GM12878 (cell line): ENCODE measurements at regions of chr15 and their contacts with region 1.

Region 1: GRCh38 chr15:85494048-85494793 is 113.8 kb downstream of the AKAP13 start:
- DNase-seq: no peak
- ATAC-seq: no peak
- H3K4me3 ChIP-seq: no peak overlapping the region
- H3K27ac ChIP-seq: no peak overlapping the region
- H3K4me1 ChIP-seq: peaks cover 15% of the 10 kb centered on the region
- H3K27me3 ChIP-seq: no peaks in the 10 kb centered on the region
- CTCF ChIP-seq: no peak
- EP300 ChIP-seq: no peak
- POLR2A ChIP-seq: no peak
- RAD21 ChIP-seq: no peak

Region 2: DNA sequence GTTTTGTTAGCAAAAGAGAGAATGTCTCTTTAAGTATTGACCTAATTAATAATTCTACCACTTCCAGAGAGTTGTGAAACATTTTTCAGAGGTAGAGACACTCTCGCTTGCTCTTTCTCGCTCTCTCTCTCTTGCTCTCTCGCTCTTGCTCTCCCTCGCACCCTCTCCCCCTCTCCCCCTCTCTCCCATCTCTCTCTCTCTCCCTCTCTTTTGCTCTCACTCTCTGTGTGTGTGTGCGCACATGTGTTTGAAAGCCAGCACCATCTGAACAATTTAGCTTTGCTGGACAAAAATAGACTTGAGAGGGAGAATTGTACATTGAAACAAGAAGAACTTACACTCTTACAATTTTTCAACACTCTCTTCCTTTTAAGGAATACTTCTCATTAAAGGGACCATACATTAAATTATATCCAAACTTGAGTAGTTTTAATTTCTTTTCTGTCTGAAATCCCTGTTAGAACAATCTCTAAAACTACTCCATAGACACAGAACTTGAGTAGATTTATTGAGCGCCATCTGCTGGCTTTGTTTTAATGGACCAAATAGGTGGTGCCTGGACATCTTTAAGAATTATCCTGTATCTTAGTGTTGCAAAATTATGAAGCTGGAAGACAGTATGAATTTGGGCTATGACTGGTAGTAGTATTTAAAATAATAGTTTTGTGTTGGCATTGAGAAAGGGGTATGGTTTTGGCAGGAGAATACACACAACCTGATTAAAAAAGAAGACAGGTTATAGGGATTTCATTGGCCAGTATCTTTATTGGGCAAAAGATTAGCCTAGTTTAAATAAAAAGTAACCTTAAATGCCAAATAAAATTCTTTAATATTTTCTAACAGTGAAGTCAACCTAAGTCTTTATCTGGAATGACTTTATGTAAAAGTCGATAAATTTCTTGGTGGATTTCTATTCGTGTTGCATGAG is 10.8 kb after region 1 on chr15:
- CTCF ChIA-PET with region 1: interaction called, 170 read pairs
- POLR2A ChIA-PET with region 1: interaction called, 3 read pairs
- RAD21 ChIA-PET with region 1: interaction called, 75 read pairs
- SMC1A ChIA-PET with region 1: interaction called, 147 read pairs
- in situ Hi-C with region 1: no loop called
- intact Hi-C with region 1: no loop called
- DNase-seq: no peak
- ATAC-seq: peak; percentile 86
- H3K4me3 ChIP-seq: no peak overlapping the region
- H3K27ac ChIP-seq: no peak overlapping the region
- H3K4me1 ChIP-seq: peaks cover 18% of the 10 kb centered on the region
- H3K27me3 ChIP-seq: no peaks in the 10 kb centered on the region
- CTCF ChIP-seq: peak; percentile 38 to 59 (median 55); a peak in 5 of 6 replicates
- EP300 ChIP-seq: no peak
- POLR2A ChIP-seq: no peak
- RAD21 ChIP-seq: peak; percentile 63

Region 3: GRCh38 chr15:85551221-85551832 is 57.1 kb after region 1 on chr15:
- CTCF ChIA-PET with region 1: no interaction called
- POLR2A ChIA-PET with region 1: no interaction called
- RAD21 ChIA-PET with region 1: no interaction called
- SMC1A ChIA-PET with region 1: no interaction called
- in situ Hi-C with region 1: no loop called
- intact Hi-C with region 1: no loop called
- DNase-seq: no peak
- ATAC-seq: no peak
- H3K4me3 ChIP-seq: no peak overlapping the region
- H3K27ac ChIP-seq: no peak overlapping the region
- H3K4me1 ChIP-seq: peaks cover 24% of the 10 kb centered on the region
- H3K27me3 ChIP-seq: no peaks in the 10 kb centered on the region
- CTCF ChIP-seq: no peak
- EP300 ChIP-seq: no peak
- POLR2A ChIP-seq: no peak
- RAD21 ChIP-seq: no peak

Region 4: GRCh38 chr15:86515625-86516024 is 1021.4 kb after region 1 on chr15:
- CTCF ChIA-PET with region 1: no interaction called
- POLR2A ChIA-PET with region 1: no interaction called
- RAD21 ChIA-PET with region 1: no interaction called
- SMC1A ChIA-PET with region 1: no interaction called
- in situ Hi-C with region 1: no loop called
- intact Hi-C with region 1: no loop called
- DNase-seq: no peak
- ATAC-seq: no peak
- H3K4me3 ChIP-seq: no peak overlapping the region
- H3K27ac ChIP-seq: no peak overlapping the region
- H3K4me1 ChIP-seq: no peaks in the 10 kb centered on the region
- H3K27me3 ChIP-seq: no peaks in the 10 kb centered on the region
- CTCF ChIP-seq: no peak
- EP300 ChIP-seq: no peak
- POLR2A ChIP-seq: no peak
- RAD21 ChIP-seq: no peak